Stomach (tissue), 19 donors: ENCODE measurements at regions of chr4 and their contacts with region 1.

Region 1: DNA sequence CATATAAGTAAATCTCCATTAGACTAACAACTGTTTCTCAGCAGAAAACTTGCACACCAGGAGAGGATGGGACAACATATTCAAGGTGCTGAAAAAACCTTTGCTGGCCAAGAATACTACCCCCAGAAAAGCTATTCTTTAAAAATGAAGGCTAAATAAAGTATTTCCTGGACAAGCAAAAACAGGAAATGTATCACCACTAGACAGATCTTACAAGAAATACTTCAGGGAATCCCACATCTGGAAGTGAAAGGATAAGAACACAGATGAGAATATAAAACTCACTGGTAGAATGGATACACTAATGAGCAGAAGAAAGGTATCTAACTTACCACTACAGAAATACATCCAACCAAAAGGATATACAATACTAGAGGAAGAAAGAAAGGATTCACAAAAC is 27.0 kb upstream of the ADH1C start:
- DNase-seq: no peak
- H3K4me3 ChIP-seq: no peak overlapping the region
- H3K27ac ChIP-seq: no peak overlapping the region
- H3K4me1 ChIP-seq: peaks cover 6 to 39% (median 15%) of the 10 kb centered on the region in 4 donors
- H3K27me3 ChIP-seq: no peaks in the 10 kb centered on the region
- CTCF ChIP-seq: no peak
- EP300 ChIP-seq: no peak
- POLR2A ChIP-seq: no peak

Region 2: GRCh38 chr4:98493296-98493695 is 886.3 kb before region 1 on chr4:
- intact Hi-C with region 1: loop called (anchors 10 kb)
- DNase-seq: no peak
- H3K4me3 ChIP-seq: no peak overlapping the region
- H3K27ac ChIP-seq: no peak overlapping the region
- H3K4me1 ChIP-seq: peaks cover 0 to 39% (median 7%) of the 10 kb centered on the region in 4 donors
- H3K27me3 ChIP-seq: no peaks in the 10 kb centered on the region
- CTCF ChIP-seq: no peak
- EP300 ChIP-seq: no peak
- POLR2A ChIP-seq: no peak

Region 3: DNA sequence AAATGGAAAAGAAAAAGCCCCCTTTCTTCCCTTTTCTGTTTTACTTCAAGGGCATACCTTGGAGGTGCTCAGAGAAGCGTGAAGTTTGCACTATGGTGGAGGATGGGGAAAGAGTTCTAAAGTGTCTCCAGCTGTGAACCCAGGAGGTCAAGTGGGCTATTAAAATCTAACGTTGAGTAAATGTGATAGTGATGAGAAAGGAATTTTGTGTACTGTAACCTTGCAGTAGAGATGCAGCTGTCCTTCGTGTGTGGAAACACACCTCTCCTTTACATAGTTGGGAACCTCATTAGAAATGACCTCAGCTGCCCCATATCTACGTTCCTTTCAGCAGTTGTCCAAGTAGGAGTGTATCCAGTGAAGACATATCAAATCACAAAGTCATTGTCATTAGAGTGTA is 317.5 kb before region 1 on chr4:
- intact Hi-C with region 1: no loop called
- DNase-seq: no peak
- H3K4me3 ChIP-seq: no peak overlapping the region
- H3K27ac ChIP-seq: no peak overlapping the region
- H3K4me1 ChIP-seq: no peaks in the 10 kb centered on the region
- H3K27me3 ChIP-seq: no peaks in the 10 kb centered on the region
- CTCF ChIP-seq: no peak
- EP300 ChIP-seq: no peak
- POLR2A ChIP-seq: no peak

Region 4: DNA sequence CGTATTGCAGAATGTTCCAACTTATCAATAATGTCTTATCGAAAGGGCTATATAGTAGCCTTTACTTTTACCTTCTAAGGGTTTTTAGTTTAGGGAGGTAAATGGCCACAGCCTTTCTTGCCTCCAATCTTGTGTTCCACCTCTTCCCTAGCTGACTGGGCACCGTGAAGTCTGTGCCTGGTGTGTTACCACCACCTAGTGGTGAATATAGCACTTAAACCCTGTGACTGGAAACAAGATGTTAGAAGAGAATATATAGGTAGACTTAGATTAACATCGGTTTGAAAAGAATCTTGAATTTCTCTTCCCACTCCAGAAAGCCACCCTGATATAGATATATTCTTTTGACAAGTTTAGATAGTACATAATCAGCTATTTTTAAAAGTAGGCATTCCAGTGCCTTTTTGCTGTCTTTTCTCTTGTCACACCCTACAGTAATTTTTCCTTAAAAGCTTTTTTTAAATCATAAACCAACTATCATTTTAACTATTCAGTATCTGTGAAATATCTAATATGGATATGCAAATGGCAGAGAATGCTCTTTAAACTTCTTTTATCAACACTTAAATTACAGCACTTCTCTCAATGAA is 83.4 kb after region 1 on chr4:
- intact Hi-C with region 1: no loop called
- DNase-seq: peak; percentile 65 to 89
- H3K4me3 ChIP-seq: no peak overlapping the region
- H3K27ac ChIP-seq: peak overlapping the region in 1 of 5 donors; percentile 46
- H3K4me1 ChIP-seq: peaks cover 0 to 7% (median under 1%) of the 10 kb centered on the region in 4 donors
- H3K27me3 ChIP-seq: no peaks in the 10 kb centered on the region
- CTCF ChIP-seq: peak in 5 of 7 experiments; percentile 51 to 85 (median 68)
- EP300 ChIP-seq: no peak
- POLR2A ChIP-seq: no peak

Region 5: DNA sequence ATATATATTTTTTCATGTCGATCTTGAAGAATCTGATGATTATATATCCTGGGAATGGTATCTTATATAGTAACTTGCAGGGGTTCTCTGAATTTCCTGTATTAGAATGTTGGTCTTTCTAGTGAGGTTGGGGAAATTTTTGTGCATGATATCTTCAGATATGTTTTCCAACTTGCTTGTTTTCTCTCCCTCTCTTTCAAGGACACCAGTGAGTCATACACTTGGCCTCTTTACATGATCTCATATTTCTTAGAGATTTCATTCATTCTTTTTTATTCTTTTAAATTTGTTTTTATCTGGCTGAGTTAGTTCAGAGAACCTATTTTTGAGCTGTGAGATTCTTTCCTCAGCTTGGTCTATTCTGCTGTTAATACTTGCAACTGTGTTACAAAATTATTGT is 104.1 kb after region 1 on chr4:
- intact Hi-C with region 1: no loop called
- DNase-seq: no peak
- H3K4me3 ChIP-seq: no peak overlapping the region
- H3K27ac ChIP-seq: no peak overlapping the region
- H3K4me1 ChIP-seq: no peaks in the 10 kb centered on the region
- H3K27me3 ChIP-seq: no peaks in the 10 kb centered on the region
- CTCF ChIP-seq: no peak
- EP300 ChIP-seq: no peak
- POLR2A ChIP-seq: no peak